Naive thymus-derived CD8-positive, alpha-beta T cell (primary cell): ENCODE measurements at regions of chr1 and their contacts with region 1.

Region 1: DNA sequence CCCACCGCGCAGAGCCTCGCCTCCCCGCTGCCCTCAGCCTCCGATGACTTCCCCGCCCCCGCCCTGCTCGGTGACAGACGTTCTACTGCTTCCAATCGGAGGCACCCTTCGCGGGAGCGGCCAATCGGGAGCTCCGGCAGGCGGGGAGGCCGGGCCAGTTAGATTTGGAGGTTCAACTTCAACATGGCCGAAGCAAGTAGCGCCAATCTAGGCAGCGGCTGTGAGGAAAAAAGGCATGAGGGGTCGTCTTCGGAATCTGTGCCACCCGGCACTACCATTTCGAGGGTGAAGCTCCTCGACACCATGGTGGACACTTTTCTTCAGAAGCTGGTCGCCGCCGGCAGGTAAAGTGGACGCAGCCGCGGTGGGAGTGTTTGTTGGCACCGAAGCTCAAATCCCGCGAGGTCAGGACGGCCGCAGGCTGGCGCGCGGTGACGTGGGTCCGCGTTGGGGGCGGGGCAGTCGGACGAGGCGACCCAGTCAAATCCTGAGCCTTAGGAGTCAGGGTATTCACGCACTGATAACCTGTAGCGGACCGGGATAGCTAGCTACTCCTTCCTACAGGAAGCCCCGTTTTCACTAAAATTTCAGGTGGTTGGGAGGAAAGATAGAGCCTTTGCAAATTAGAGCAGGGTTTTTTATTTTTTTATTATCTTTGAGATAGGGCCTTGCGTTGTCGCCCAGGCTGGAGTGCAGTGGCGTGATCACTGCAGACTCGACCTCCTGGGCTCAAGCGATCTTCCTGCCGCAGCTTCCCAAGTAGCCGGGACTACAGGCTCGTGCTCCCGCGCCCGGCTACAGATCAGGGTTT is at the start of gene PMF1:
- DNase-seq: peak; percentile 92 to 97 (median 94)
- ATAC-seq: peak; percentile 97
- H3K4me3 Mint-ChIP-seq: peak within 1 kb of the TSS; percentile 94 to 98 (median 96)
- H3K27ac Mint-ChIP-seq: peak within 1 kb of the TSS; percentile 96 to 100 (median 100)
- H3K4me1 Mint-ChIP-seq: peaks cover 17 to 48% (median 40%) of the 10 kb centered on the region in 4 donors
- H3K27me3 Mint-ChIP-seq: no peaks in the 10 kb centered on the region
- polyA plus RNA-seq, gene PMF1: 70.8 to 79.9 (median 76.5) TPM

Region 2: DNA sequence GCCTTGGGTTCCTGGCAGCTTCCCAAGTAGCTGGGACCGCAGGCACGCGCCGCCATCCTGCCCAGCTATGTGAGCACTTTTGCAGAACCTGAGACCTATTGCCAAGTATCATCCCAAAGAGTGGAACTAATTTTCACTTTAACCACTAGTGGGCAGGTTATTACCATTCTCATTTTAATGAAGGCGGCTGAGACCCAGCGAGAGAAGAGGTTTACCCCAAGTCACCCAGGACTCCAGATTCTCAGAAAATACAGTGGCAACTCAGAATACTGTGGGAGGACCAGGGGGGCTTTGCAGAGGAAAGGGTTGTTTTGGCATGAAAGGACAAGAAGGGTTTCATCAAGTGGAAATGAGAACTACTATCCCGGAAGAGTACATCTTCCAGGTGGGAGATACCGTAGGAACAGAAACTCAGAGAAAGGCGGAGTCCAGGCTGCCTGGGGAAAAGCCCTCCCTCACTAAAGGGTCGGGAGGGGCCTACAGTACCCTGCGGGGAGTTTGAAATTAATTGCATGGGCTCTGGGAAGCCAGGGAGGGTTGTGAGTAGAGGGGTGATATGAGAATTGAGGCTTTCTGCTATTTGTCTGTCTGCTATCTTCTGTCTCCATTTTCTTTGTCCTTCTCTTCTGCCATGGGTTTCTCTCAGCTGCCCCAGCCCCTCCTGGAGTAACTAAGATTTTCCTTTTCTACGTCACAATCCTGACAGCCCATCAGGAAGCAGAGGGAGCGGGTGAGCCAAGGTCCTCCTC is 66.8 kb before region 1 on chr1:
- POLR2A ChIA-PET with region 1: interaction called, 14 read pairs
- DNase-seq: peak in 8 of 10 donors; percentile 23 to 78 (median 58)
- ATAC-seq: peak; percentile 70 to 92
- H3K4me3 Mint-ChIP-seq: peak overlapping the region; percentile 62 to 86 (median 72)
- H3K27ac Mint-ChIP-seq: peak overlapping the region in 9 of 10 donors; percentile 29 to 95 (median 70)
- H3K4me1 Mint-ChIP-seq: peaks cover 10 to 46% (median 28%) of the 10 kb centered on the region in 4 donors
- H3K27me3 Mint-ChIP-seq: no peaks in the 10 kb centered on the region

Region 3: GRCh38 chr1:156193488-156194299 is 19.3 kb before region 1 on chr1 and contains the start of gene SLC25A44:
- POLR2A ChIA-PET with region 1: interaction called, 48 read pairs
- DNase-seq: peak; percentile 88 to 98 (median 97)
- ATAC-seq: peak; percentile 98
- H3K4me3 Mint-ChIP-seq: peak within 1 kb of the TSS; percentile 94 to 100 (median 96)
- H3K27ac Mint-ChIP-seq: peak within 1 kb of the TSS; percentile 90 to 99 (median 95)
- H3K4me1 Mint-ChIP-seq: peaks cover 29 to 55% (median 44%) of the 10 kb centered on the region in 4 donors
- H3K27me3 Mint-ChIP-seq: no peaks in the 10 kb centered on the region
- polyA plus RNA-seq, gene SLC25A44: 6.0 to 16.4 (median 9.7) TPM

Region 4: DNA sequence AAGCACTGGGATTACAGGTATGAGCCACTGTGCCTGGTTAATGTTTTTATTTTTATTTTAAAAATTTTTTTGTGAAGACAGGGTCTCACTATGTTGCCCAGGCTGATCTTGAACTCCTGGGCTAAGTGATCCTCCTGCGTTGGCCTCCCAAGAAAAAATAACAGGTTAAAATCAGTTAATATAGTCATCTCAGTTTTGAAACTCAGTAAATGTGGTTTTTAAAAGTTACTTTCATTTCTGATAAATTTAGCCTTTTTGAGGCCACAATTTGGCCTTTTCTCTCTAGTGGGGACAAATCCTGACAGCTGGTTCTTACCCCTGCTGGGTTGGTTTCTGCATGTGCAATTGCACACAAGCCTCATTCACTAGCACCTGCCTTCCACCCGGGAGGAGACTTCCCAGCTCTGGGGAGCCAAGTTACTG is 13.1 kb after region 1 on chr1:
- POLR2A ChIA-PET with region 1: interaction called, 14 read pairs
- DNase-seq: no peak
- ATAC-seq: no peak
- H3K4me3 Mint-ChIP-seq: peak overlapping the region in 1 of 10 donors; percentile 29
- H3K27ac Mint-ChIP-seq: peak overlapping the region in 1 of 10 donors; percentile 23
- H3K4me1 Mint-ChIP-seq: peaks cover 17 to 23% (median 20%) of the 10 kb centered on the region in 4 donors
- H3K27me3 Mint-ChIP-seq: no peaks in the 10 kb centered on the region

Region 5: DNA sequence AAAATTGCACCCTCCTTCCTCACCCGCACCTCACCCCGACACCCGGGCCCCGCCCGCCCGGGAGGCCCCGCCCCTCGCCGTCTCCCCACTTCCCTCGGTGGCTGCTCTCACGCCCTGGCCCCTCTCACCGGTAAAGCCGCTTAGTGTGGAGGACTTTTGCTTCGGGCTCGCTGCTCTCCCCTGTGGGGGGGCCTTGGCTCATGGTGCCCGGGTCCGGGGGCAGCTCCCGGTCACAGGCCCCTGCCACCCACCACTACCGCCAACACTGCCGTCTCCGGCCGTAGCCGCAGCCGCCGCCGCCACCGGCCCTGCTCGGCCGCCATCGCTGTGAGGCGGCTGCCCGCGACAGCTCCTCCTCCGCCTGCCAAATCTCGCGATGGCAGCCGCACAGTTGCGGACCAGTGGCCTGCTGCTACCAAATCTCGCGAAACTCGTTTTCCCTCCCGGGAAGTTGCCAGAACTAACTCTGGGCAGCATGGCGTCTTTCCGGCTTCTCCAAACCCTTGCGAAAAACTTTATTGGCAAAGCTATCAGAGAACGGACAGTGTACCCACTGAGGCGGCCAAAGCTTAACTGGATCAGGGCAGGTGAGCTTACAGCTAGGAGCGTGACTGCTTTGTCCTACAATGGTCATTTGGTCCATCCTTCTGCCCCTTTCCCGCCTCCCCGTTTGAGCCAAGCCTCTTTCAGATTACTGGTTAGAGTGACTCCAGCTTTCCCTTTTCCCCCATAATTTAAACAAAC is 69.6 kb after region 1 on chr1 and contains the start of gene SMG5:
- POLR2A ChIA-PET with region 1: interaction called, 16 read pairs
- DNase-seq: peak; percentile 91 to 98 (median 96)
- ATAC-seq: peak; percentile 94 to 95
- H3K4me3 Mint-ChIP-seq: peak within 1 kb of the TSS; percentile 93 to 100 (median 97)
- H3K27ac Mint-ChIP-seq: peak within 1 kb of the TSS; percentile 92 to 98 (median 96)
- H3K4me1 Mint-ChIP-seq: peaks cover 28 to 50% (median 47%) of the 10 kb centered on the region in 4 donors
- H3K27me3 Mint-ChIP-seq: no peaks in the 10 kb centered on the region
- polyA plus RNA-seq, gene SMG5: 9.5 to 28.4 (median 11.1) TPM